ENCODE measurements at regions of chr11 and their contacts with region 1.

Region 1: GRCh38 chr11:46889689-46890475 is 28.5 kb downstream of the LRP4 start:
- DNase-seq: peak in 7 of 10 donors; percentile 46 to 90 (median 76)

Region 2: GRCh38 chr11:46669711-46670139 is 220.2 kb before region 1 on chr11:
- intact Hi-C with region 1: no loop called
- DNase-seq: peak in 2 of 10 donors; percentile 69 to 87

Region 3: DNA sequence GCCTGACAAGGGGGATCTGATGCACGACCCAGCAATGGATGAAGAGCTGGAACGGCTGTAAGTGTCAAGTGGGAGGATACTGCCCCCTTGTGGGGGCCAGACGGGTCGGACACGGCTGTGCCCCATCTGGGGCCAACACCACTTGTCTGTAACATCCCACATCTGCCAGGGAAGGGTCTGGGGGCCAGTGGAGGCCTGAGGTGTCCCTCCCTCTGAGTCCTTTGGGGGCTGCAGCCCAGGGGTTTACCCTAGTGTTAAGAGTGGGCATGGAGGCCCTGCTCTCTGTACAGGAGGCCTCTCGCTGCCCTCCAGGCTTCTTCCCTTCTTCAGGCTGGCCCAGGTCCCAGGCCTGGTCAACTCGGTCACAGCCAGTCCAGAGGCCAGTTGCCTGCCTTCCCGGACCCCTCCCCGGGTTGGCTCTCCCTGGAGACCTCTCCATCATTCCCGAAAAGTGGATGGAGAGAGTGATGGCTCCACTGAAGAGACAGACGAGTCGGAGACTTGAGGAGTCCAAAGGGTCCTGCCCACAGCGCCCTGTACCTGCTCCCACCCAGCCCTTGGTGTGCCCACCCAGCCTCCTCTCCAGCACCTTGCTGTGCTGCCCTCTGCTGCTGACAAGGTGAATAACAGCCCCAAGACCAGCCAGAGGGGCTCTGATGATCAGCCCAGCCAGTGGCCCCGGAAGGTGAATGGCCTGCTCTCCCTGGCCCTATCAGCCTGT is 271.4 kb after region 1 on chr11:
- intact Hi-C with region 1: loop called (anchors 2 kb)
- DNase-seq: peak in 7 of 10 donors; percentile 57 to 94 (median 75)

Measured in posterior cingulate gyrus (tissue), 11 donors.